ENCODE measurements at regions of chr6 and their contacts with region 1.

Region 1: DNA sequence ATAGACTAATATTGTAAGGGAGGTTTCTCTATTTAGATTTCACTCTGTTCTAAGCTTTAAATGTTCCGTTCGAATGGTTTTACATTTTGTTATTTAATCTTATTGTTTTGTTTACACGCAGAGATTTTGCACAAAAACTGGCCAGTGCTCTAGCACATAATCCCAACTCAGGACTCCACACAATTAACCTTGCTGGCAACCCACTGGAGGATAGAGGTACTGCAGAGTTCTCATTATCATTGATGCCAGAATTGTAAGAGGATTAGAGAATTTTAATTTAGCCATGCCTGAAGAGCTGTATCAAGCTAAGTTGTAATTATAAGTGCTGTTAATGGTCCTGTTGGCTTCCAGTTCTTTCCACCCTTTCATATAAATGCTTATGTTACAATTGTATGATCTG is 179.7 kb upstream of the SCGN start:
- DNase-seq: no peak
- H3K4me3 ChIP-seq: no peak overlapping the region
- H3K4me3 Mint-ChIP-seq: no peak overlapping the region
- H3K27ac ChIP-seq: no peak overlapping the region
- H3K27ac Mint-ChIP-seq: no peak overlapping the region
- H3K4me1 ChIP-seq: peaks cover 6 to 7% of the 10 kb centered on the region in 2 donors
- H3K4me1 Mint-ChIP-seq: peaks cover 18% of the 10 kb centered on the region
- H3K27me3 ChIP-seq: no peaks in the 10 kb centered on the region
- H3K27me3 Mint-ChIP-seq: no peaks in the 10 kb centered on the region
- CTCF ChIP-seq: peak; percentile 25

Region 2: DNA sequence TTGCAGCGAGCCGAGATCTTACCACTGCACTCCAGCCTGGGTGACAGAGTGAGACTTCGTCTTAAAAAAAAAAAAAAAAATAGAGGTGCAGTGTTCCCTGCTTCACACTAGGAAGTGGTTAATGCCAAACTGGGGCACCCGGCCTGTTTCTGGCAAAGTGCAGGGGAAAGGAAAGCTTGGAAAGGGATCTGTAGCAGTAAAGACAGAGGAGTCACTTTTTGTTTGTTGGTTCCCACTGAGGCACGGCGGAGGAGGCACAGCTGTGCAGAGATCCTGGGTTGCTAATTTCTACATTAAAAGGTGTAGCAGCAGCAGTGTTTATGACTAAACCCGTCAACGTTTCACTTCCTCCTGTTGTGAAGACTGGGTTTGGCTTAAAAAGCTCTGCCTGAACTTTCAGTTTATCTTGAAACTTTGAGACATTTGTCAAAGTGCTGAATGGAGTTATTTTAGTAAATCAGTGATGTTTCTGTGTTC is 67.6 kb before region 1 on chr6:
- intact Hi-C with region 1: loop called in 1 of 2 experiments (anchors 10 kb)
- DNase-seq: peak; percentile 31 to 78 (median 64)
- H3K4me3 ChIP-seq: peak overlapping the region; percentile 27 to 73 (median 70)
- H3K4me3 Mint-ChIP-seq: no peak overlapping the region
- H3K27ac ChIP-seq: peak overlapping the region; percentile 48 to 76
- H3K27ac Mint-ChIP-seq: peak overlapping the region in 2 of 7 donors; percentile 58 to 77
- H3K4me1 ChIP-seq: peaks cover 34 to 37% of the 10 kb centered on the region in 2 donors
- H3K4me1 Mint-ChIP-seq: no peaks in the 10 kb centered on the region
- H3K27me3 ChIP-seq: no peaks in the 10 kb centered on the region
- H3K27me3 Mint-ChIP-seq: no peaks in the 10 kb centered on the region
- CTCF ChIP-seq: no peak

Measured in CD14-positive monocyte (primary cell).